Right cardiac atrium (tissue), 5 donors: ENCODE measurements at regions of chr4 and their contacts with region 1.

Region 1: GRCh38 chr4:128454281-128455075 is 166.9 kb upstream of the PGRMC2 start:
- DNase-seq: peak; percentile 81 to 89 (median 83)
- ATAC-seq: peak; percentile 90 to 95
- H3K4me3 ChIP-seq: no peak overlapping the region
- H3K27ac ChIP-seq: no peak overlapping the region
- H3K4me1 ChIP-seq: peaks cover 3% of the 10 kb centered on the region
- H3K27me3 ChIP-seq: no peaks in the 10 kb centered on the region

Region 2: GRCh38 chr4:128553686-128554515 is 99.4 kb after region 1 on chr4:
- intact Hi-C with region 1: loop called in 3 of 4 experiments (anchors 5 to 10 kb)
- DNase-seq: no peak
- ATAC-seq: peak in 1 of 2 donors; percentile 43
- H3K4me3 ChIP-seq: peak overlapping the region; percentile 78
- H3K27ac ChIP-seq: peak overlapping the region; percentile 21
- H3K4me1 ChIP-seq: peaks cover 3% of the 10 kb centered on the region
- H3K27me3 ChIP-seq: no peaks in the 10 kb centered on the region

Region 3: GRCh38 chr4:128558896-128559679 is 104.6 kb after region 1 on chr4:
- intact Hi-C with region 1: loop called in 3 of 4 experiments (anchors 5 to 10 kb)
- DNase-seq: peak in 2 of 3 donors; percentile 18 to 48
- ATAC-seq: peak; percentile 51 to 64
- H3K4me3 ChIP-seq: no peak overlapping the region
- H3K27ac ChIP-seq: peak overlapping the region; percentile 12
- H3K4me1 ChIP-seq: peaks cover 6% of the 10 kb centered on the region
- H3K27me3 ChIP-seq: no peaks in the 10 kb centered on the region

Region 4: DNA sequence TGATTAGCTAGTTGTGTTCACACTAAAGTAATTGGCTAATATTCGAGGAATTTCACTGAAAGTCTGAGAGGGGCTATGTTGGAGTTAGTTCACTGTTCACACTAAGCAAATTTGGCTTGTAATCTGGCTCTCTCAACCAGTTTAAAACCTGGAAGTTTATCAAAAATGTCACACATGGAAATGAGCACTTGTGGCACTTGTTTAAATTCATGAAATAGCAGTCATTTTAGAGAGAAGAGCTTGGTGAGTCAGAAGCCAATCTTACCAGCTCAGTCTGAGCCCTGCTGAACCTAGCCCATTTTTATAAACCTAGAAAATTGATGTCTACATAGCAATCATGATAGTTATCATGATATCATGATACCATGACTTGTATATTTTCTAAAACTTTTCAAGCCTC is 264.3 kb after region 1 on chr4:
- intact Hi-C with region 1: no loop called
- DNase-seq: no peak
- ATAC-seq: no peak
- H3K4me3 ChIP-seq: no peak overlapping the region
- H3K27ac ChIP-seq: no peak overlapping the region
- H3K4me1 ChIP-seq: peaks cover 2% of the 10 kb centered on the region
- H3K27me3 ChIP-seq: no peaks in the 10 kb centered on the region